ENCODE measurements at regions of chrX and their contacts with region 1.

Region 1: DNA sequence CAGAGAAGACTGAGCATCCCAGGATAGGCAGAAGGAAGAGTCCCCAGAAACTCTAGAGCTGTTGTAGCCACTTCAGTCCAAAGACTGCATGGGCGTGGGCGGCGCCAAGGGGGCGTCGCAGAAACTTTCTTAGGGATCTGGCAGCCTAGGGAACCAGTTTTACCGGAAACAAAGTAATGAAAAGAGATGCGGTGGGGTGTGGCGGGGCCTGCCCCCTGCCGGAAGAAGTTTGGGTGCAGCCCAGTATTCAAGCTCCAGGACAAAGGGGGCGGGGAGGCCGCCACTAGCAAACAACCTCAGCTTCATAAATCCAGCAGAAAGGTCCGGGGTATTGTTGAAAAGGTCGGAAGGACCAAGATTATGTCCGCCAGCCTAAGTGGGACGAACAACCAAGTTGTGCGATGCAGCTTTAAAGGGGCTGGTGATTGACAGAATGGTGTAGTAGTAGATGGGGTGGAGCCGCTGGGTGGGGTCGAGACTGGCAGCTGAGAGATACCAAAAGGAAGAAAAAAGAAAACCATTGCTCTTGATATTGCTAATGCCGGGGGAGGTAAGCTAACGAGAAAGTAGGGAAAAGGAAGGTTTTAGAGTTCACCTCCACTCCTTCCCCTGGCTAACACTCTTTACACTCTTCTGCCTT is 190.5 kb downstream of the RRAGB start:
- DNase-seq: peak in 13 of 14 experiments; percentile 6 to 63 (median 38)
- ATAC-seq: peak; percentile 69
- H3K4me3 ChIP-seq: peak overlapping the region; percentile 81
- H3K4me3 Mint-ChIP-seq: peak overlapping the region; percentile 100
- H3K27ac ChIP-seq: peak overlapping the region in 1 of 2 donors; percentile 36
- H3K27ac Mint-ChIP-seq: peak overlapping the region; percentile 86
- H3K4me1 ChIP-seq: peaks cover 12% of the 10 kb centered on the region
- H3K4me1 Mint-ChIP-seq: peaks cover 28% of the 10 kb centered on the region
- H3K27me3 ChIP-seq: no peaks in the 10 kb centered on the region
- H3K27me3 Mint-ChIP-seq: no peaks in the 10 kb centered on the region
- CTCF ChIP-seq: peak; percentile 53

Region 2: DNA sequence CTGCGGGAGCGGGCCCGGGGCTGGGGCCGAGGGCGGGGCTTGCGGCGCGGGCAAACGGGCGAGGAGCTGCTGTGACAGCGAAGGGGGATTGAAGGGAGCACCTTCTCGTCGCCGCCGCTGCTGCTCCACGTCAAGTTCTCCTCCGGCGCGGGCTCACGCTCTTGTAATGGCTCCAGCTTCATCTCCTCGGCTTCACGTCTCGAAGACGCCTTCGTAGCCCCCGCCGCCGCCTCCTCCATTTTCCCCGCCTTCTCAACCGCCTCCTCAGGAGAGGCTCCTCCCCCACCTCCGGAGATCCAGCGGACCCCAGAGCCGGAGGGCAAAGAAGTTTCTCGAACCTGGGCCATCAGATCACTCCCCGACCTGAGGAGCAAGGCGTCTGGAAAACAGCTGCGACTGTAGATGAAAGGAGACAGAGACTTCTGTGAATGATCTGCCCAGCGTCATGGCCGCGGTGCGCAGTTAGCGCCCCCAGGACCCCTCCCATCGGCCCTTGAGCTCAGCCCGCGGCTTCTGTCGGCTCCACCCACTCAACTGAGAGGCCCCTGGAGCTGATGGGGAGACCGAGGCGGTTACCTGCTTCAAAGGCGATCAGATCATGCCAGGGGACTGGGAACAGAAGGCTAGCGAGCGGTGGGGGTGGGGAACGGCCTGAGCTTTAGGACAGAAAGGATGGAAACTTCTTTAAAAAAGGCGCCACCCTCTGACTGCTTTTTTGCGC is 419.3 kb before region 1 on chrX:
- CTCF ChIA-PET with region 1: interaction called, 4 read pairs
- POLR2A ChIA-PET with region 1: interaction called, 20 read pairs
- intact Hi-C with region 1: no loop called
- DNase-seq: peak; percentile 43 to 80 (median 59)
- ATAC-seq: peak; percentile 75
- H3K4me3 ChIP-seq: peak overlapping the region; percentile 87
- H3K4me3 Mint-ChIP-seq: peak overlapping the region; percentile 98
- H3K27ac ChIP-seq: peak overlapping the region; percentile 72 to 85
- H3K27ac Mint-ChIP-seq: peak overlapping the region; percentile 96
- H3K4me1 ChIP-seq: peaks cover 10% of the 10 kb centered on the region
- H3K4me1 Mint-ChIP-seq: peaks cover 17% of the 10 kb centered on the region
- H3K27me3 ChIP-seq: no peaks in the 10 kb centered on the region
- H3K27me3 Mint-ChIP-seq: no peaks in the 10 kb centered on the region
- CTCF ChIP-seq: no peak

Region 3: DNA sequence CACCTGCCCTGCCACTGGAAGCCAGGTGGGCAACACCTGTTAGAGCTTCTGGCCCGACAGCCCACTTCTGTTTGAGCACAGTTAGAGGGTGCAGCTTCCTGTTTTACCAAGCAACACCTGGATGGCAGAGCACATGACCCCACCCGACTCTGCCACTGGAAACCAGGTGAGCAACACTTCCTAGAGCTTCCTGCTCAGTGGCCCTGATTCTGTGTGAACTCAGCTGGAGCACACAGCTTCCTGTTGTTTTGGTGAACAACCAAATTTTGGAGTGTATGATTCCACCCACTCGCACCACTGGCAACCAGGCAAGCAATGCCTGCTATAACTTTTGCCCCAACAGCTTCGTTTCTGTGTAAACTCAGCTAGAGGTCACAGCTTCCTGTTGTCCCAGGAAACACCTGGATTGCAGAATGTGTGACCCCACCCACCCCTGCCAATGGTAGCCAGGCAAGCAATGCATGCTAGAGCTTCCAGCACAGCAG is 160.2 kb after region 1 on chrX:
- CTCF ChIA-PET with region 1: no interaction called
- POLR2A ChIA-PET with region 1: interaction called, 14 read pairs
- intact Hi-C with region 1: no loop called
- DNase-seq: peak in 4 of 14 experiments; percentile 0 to 5 (median 3)
- ATAC-seq: peak; percentile 67
- H3K4me3 ChIP-seq: no peak overlapping the region
- H3K4me3 Mint-ChIP-seq: peak overlapping the region; percentile 56
- H3K27ac ChIP-seq: no peak overlapping the region
- H3K27ac Mint-ChIP-seq: peak overlapping the region; percentile 90
- H3K4me1 ChIP-seq: peaks cover 26% of the 10 kb centered on the region
- H3K4me1 Mint-ChIP-seq: peaks cover 36% of the 10 kb centered on the region
- H3K27me3 ChIP-seq: no peaks in the 10 kb centered on the region
- H3K27me3 Mint-ChIP-seq: no peaks in the 10 kb centered on the region
- CTCF ChIP-seq: no peak

Region 4: DNA sequence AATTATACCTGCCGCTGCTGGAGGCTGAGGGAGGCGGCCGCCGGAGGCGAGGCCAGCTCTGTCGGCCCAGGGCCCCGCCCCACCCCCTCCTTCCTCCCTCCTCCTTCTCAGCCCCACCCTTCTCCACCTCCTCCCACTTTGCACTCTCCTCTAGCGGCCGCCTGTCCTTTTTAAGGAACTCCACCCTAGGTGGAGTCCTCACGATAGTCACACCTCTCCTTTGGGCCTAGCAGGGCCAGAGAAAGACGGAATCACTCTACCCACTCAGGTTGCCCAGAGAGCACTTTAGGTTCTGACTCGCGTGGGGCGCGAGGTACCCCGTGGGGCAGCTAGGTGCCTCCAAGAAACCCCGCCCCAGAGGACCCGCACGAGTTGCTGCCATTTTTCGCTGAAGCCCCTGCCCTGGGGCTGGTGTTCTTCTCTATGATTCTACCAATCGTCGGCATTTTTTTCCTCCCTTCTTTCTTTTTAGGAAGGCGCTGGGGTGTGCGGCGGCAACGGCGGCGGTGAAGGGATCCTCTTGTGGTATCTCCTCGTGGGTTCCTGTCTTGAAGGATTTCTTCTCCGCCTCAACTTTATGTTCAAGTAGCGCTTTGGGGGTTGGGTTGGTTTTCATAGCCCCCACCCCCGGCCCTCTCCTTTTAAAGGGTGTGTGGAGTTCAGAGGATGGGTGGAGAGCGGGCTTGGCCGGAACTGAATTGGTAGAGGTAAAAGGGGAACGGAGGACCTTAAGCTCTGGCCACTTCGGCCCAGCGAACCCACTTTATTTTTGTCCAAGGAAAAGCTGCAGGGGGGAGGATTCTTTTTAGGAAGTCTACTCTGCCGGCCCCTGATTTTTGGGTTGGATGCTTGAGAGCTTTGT is 324.4 kb after region 1 on chrX and contains the start of gene KLF8:
- CTCF ChIA-PET with region 1: no interaction called
- POLR2A ChIA-PET with region 1: no interaction called
- intact Hi-C with region 1: loop called in 1 of 2 experiments (anchors 10 kb)
- DNase-seq: peak in 13 of 14 experiments; percentile 3 to 67 (median 19)
- ATAC-seq: peak; percentile 75
- H3K4me3 ChIP-seq: peak within 1 kb of the TSS; percentile 61
- H3K4me3 Mint-ChIP-seq: peak within 1 kb of the TSS; percentile 90
- H3K27ac ChIP-seq: no peak within 1 kb of the TSS
- H3K27ac Mint-ChIP-seq: peak within 1 kb of the TSS; percentile 74
- H3K4me1 ChIP-seq: peaks cover 22% of the 10 kb centered on the region
- H3K4me1 Mint-ChIP-seq: peaks cover 35% of the 10 kb centered on the region
- H3K27me3 ChIP-seq: no peaks in the 10 kb centered on the region
- H3K27me3 Mint-ChIP-seq: no peaks in the 10 kb centered on the region
- CTCF ChIP-seq: no peak
- total RNA-seq, gene KLF8: 5.6 to 6.2 TPM